GM10248 (cell line): ENCODE measurements at regions of chr3 and their contacts with region 1.

Region 1: GRCh38 chr3:39288300-39288808 is 8.5 kb upstream of the CX3CR1 start:
- DNase-seq: peak; percentile 94
- CTCF ChIP-seq: peak; percentile 95

Region 2: DNA sequence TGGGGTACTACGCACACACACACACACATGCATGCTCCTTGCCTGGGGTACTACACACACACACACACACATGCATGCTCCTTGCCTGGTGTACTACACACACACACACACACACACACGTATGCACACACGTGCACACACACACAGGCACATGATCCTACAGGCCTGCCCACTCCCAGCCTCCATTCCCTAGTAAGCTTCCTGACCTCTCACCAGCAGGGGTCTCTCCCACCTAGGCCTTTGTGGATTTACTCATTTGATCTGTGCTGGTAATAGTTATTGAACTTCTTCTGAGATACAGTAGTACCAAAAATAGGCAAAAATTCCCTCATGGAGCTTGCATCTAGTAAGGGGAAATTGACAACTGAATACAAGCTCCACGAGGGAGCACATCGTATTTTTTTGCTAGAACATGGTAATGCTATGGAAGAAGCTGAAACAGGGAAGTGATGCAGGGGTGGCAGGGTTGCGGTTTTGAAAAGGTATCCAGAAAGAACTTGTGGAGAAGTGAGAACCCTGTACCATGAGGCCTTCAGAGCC is 161.8 kb before region 1 on chr3:
- CTCF ChIA-PET with region 1: interaction called, 178 read pairs
- POLR2A ChIA-PET with region 1: no interaction called
- DNase-seq: no peak
- CTCF ChIP-seq: peak; percentile 42

Region 3: DNA sequence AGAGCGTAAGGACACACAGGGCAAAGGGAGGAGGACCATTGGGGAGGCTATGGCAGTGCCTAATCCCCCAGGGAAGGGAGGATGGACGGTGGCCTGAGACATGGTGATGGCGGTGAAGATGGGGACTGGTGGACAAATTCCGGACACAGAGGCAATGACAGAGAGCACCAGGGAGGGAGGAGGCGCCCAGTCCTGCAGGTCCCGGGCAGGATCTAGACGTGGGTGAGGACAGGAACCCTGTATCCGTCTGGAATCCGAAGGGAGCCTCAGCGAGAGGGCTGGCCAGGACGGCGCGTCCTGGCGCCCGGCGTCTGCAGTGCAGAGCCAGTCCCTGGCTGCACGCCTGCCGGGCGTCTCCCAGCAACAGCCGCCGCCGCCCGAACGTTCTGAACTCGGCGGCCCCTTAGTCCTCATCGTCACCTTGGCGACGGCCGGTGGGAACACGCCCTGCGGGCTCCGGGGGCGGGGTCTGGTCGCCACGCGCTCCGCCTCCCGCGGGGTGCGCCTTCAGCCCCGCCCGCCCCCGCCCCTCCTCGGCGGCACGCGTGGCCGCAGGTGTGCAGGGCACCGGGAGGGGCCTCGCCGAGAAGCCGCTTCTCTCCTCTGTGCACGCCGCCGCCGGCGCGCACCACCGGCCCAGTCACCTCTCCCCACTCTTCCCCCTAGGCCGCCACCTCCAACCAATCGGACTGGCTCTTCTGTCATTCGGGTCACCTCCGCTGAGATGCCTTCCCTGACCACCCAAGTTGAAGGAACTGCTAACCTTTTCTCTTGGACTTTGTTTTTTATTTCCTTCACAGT is 107.6 kb before region 1 on chr3:
- CTCF ChIA-PET with region 1: interaction called, 691 read pairs
- POLR2A ChIA-PET with region 1: no interaction called
- DNase-seq: peak; percentile 95
- CTCF ChIP-seq: no peak

Region 4: DNA sequence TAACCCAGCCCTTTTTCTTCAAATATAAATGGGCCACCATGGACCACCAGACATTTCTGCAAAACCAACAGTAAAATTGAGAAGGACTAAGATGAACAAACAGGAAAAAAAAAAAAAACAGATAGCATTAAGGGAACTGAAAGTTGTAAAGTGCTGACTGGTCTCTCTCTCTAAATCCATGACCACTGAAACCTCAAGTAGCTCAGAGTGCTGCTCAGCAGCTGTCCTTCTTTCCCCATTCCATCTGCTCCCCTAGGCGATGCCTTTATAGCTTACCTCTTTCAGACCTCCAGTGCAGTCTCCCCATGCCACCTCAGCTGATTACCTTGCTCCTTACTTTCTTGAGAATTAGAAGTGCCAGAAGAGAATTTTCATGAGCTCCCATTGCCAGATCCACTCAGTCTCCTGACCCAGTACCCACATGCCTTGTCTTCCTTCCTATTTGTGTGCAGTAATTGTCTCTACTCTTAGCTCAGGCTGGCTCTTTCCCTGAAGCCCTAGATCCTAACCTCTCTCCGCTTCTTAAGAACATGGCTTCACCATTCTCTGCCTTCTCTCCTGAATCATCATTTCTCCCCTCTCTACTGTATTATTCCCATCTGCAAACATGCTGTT is 72.1 kb before region 1 on chr3:
- CTCF ChIA-PET with region 1: interaction called, 69 read pairs
- POLR2A ChIA-PET with region 1: interaction called, 3 read pairs
- DNase-seq: peak; percentile 70
- CTCF ChIP-seq: no peak

Region 5: DNA sequence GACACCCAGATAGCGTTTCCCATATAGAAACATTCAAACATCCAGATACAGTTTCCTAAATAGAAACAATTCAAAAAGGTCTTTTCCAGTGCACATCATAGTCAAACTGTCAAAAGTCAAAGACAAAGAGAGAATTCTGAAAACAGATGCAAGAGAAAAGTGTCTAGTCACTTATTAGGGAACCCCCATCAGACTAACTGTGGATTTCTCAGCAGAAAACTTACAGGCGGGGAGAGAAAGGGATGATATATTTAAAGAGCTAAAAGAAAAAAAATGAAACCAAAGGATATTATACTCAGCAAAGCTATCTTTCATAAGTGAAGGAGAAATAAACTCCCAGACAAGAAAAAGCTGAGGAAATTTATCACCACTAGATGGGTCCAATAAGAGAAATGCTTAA is 13.8 kb after region 1 on chr3:
- CTCF ChIA-PET with region 1: interaction called, 24 read pairs
- POLR2A ChIA-PET with region 1: no interaction called
- DNase-seq: no peak
- CTCF ChIP-seq: no peak

Region 6: GRCh38 chr3:39378088-39378487 is 89.7 kb after region 1 on chr3:
- CTCF ChIA-PET with region 1: interaction called, 137 read pairs
- POLR2A ChIA-PET with region 1: no interaction called
- DNase-seq: peak; percentile 70
- CTCF ChIP-seq: peak; percentile 89

Region 7: GRCh38 chr3:39485547-39485946 is 197.2 kb after region 1 on chr3:
- CTCF ChIA-PET with region 1: no interaction called
- POLR2A ChIA-PET with region 1: no interaction called
- DNase-seq: no peak
- CTCF ChIP-seq: no peak